ENCODE measurements at regions of chr10 and their contacts with region 1.

Region 1: GRCh38 chr10:59240582-59241183 is 64.2 kb downstream of the PHYHIPL start:
- DNase-seq: peak; percentile 23
- H3K4me3 ChIP-seq: no peak overlapping the region
- H3K27ac ChIP-seq: no peak overlapping the region; a peak in 1 of 4 replicates
- H3K4me1 ChIP-seq: no peaks in the 10 kb centered on the region; a peak in 1 of 4 replicates
- H3K27me3 ChIP-seq: no peaks in the 10 kb centered on the region
- CTCF ChIP-seq: peak; percentile 77
- EP300 ChIP-seq: no peak
- RAD21 ChIP-seq: peak; percentile 83

Region 2: GRCh38 chr10:58980826-58981415 is 259.8 kb before region 1 on chr10:
- CTCF ChIA-PET with region 1: no interaction called
- POLR2A ChIA-PET with region 1: no interaction called
- DNase-seq: peak; percentile 28
- H3K4me3 ChIP-seq: no peak overlapping the region
- H3K27ac ChIP-seq: peak overlapping the region in 1 of 2 experiments; percentile 78; a peak in 2 of 4 replicates
- H3K4me1 ChIP-seq: peaks cover 0 to 22% of the 10 kb centered on the region in 2 experiments; a peak in 2 of 4 replicates
- H3K27me3 ChIP-seq: no peaks in the 10 kb centered on the region
- CTCF ChIP-seq: no peak
- EP300 ChIP-seq: peak in 1 of 2 experiments; percentile 4; a peak in 1 of 4 replicates
- RAD21 ChIP-seq: no peak; the same call in 1 of the 2 replicates

Region 3: GRCh38 chr10:59212301-59212798 is 28.3 kb before region 1 on chr10:
- CTCF ChIA-PET with region 1: no interaction called
- POLR2A ChIA-PET with region 1: no interaction called
- DNase-seq: no peak
- H3K4me3 ChIP-seq: no peak overlapping the region
- H3K27ac ChIP-seq: no peak overlapping the region
- H3K4me1 ChIP-seq: peaks cover 0 to 3% of the 10 kb centered on the region in 2 experiments; a peak in 2 of 4 replicates
- H3K27me3 ChIP-seq: no peaks in the 10 kb centered on the region
- CTCF ChIP-seq: no peak
- EP300 ChIP-seq: no peak
- RAD21 ChIP-seq: no peak

Region 4: DNA sequence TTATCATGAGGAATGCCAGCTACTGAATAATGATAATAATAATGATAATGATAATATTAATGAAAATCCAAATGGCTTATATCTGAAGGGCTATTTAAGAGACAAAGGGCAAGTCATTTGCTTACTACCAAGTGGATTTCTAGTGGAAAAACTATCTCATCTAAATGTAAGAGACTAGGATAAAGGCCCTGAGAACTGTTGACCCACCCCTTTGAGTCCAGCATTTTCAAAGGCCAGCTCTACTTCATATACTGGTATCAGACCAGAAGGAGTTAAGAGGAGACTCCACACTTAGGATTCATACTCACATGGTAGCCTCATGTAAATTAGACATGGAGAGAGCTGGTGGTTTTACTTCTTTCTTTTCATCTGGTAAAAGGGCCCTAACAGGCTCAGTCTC is 11.8 kb after region 1 on chr10:
- CTCF ChIA-PET with region 1: interaction called, 10 read pairs
- POLR2A ChIA-PET with region 1: no interaction called
- DNase-seq: no peak
- H3K4me3 ChIP-seq: no peak overlapping the region
- H3K27ac ChIP-seq: no peak overlapping the region
- H3K4me1 ChIP-seq: no peaks in the 10 kb centered on the region
- H3K27me3 ChIP-seq: no peaks in the 10 kb centered on the region
- CTCF ChIP-seq: no peak
- EP300 ChIP-seq: no peak
- RAD21 ChIP-seq: no peak

Region 5: GRCh38 chr10:59382831-59383295 is 142.2 kb after region 1 on chr10:
- CTCF ChIA-PET with region 1: no interaction called
- POLR2A ChIA-PET with region 1: no interaction called
- DNase-seq: no peak
- H3K4me3 ChIP-seq: no peak overlapping the region
- H3K27ac ChIP-seq: peak overlapping the region in 1 of 2 experiments; percentile 2; a peak in 2 of 4 replicates
- H3K4me1 ChIP-seq: peaks cover 4 to 13% of the 10 kb centered on the region in 2 experiments
- H3K27me3 ChIP-seq: no peaks in the 10 kb centered on the region
- CTCF ChIP-seq: no peak
- EP300 ChIP-seq: no peak
- RAD21 ChIP-seq: no peak